PC-9 (cell line): ENCODE measurements at regions of chr1 and their contacts with region 1.

Region 1: GRCh38 chr1:186985889-186986491 is 157.2 kb downstream of the PLA2G4A start:
- DNase-seq: peak in 1 of 2 experiments; percentile 9
- H3K4me3 ChIP-seq: no peak overlapping the region
- H3K27ac ChIP-seq: no peak overlapping the region
- H3K4me1 ChIP-seq: no peaks in the 10 kb centered on the region
- H3K27me3 ChIP-seq: no peaks in the 10 kb centered on the region
- CTCF ChIP-seq: peak; percentile 80

Region 2: GRCh38 chr1:186375088-186375953 is 610.7 kb before region 1 on chr1 and contains the starts of genes ODR4 and TPR:
- CTCF ChIA-PET with region 1: interaction called, 5 read pairs
- POLR2A ChIA-PET with region 1: no interaction called
- intact Hi-C with region 1: loop called (anchors 1 kb)
- DNase-seq: peak; percentile 96 to 98
- H3K4me3 ChIP-seq: peak within 1 kb of the TSS; percentile 92
- H3K27ac ChIP-seq: peak within 1 kb of the TSS; percentile 93
- H3K4me1 ChIP-seq: peaks cover 25% of the 10 kb centered on the region; the same call in 1 of the 2 replicates
- H3K27me3 ChIP-seq: no peaks in the 10 kb centered on the region
- CTCF ChIP-seq: peak; percentile 91
- total RNA-seq, gene ODR4: 13.7 and 19.6 TPM in 2 replicates
- total RNA-seq, gene TPR: 104 and 123 TPM in 2 replicates

Region 3: DNA sequence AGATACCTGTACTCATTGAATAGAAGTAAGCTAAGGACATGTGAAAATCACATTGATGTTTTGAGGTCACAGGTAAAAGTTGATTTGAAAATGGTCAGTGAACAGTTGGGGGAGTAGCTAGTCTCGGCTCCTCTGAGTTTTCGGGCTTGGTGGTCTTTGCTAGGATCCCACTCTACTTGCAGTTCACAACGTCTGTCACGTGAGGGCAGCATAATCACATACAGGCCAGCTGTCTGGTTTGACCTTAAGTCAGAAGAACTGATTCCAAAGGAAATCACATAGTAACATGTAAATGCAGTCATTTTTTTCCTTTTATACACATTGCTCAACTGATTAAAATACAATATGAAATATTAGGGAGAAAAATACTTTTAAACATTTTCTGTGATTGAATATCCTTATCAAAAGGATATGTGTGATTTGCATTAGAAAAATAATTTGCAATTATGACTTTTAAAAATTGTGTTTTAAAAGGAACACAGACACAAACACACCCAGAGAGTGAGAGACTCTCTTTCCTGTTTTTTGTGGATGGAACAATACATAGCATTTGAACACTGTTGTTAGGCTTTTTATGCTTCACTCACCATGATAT is 503.2 kb before region 1 on chr1:
- CTCF ChIA-PET with region 1: no interaction called
- POLR2A ChIA-PET with region 1: no interaction called
- intact Hi-C with region 1: loop called (anchors 1 kb)
- DNase-seq: peak; percentile 45 to 59
- H3K4me3 ChIP-seq: no peak overlapping the region
- H3K27ac ChIP-seq: no peak overlapping the region
- H3K4me1 ChIP-seq: no peaks in the 10 kb centered on the region
- H3K27me3 ChIP-seq: no peaks in the 10 kb centered on the region
- CTCF ChIP-seq: peak; percentile 93

Region 4: DNA sequence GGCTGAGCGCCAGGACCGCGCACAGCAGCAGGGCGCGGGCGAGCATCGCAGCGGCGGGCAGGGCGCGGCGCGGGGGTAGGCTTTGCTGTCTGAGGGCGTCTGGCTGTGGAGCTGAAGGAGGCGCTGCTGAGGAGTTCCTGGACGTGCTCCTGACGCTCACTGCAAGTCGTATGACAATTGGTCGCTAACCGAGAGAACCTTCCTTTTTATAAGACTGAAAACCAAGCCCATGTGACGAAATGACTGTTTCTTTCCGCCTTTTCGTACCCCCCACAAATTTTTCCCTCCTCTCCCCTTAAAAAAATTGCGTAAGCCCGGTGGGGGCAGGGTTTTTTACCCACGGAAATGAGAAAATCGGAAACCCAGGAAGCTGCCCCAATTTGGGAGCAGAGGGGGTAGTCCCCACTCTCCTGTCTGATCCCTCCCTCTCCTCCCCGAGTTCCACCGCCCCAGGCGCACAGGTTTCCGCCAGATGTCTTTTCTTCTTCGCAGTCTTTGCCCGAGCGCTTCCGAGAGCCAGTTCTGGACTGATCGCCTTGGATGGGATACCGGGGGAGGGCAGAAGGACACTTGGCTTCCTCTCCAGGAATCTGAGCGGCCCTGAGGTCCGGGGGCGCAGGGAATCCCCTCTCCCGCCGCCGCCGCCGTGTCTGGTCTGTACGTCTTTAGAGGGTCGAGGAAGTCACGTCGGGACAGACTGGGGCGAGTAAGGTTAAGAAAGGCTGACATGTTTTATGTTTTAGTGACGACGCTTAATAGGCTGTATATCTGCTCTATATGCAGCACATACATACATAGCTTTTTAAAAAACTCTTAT is 305.5 kb before region 1 on chr1 and contains the start of gene PTGS2:
- CTCF ChIA-PET with region 1: no interaction called
- POLR2A ChIA-PET with region 1: no interaction called
- intact Hi-C with region 1: loop called (anchors 2 kb)
- DNase-seq: peak; percentile 65 to 84
- H3K4me3 ChIP-seq: peak within 1 kb of the TSS; percentile 57
- H3K27ac ChIP-seq: no peak within 1 kb of the TSS
- H3K4me1 ChIP-seq: no peaks in the 10 kb centered on the region; the same call in 1 of the 2 replicates
- H3K27me3 ChIP-seq: no peaks in the 10 kb centered on the region
- CTCF ChIP-seq: no peak; the same call in 1 of the 2 replicates
- total RNA-seq, gene PTGS2: 0.63 and 2.3 TPM in 2 replicates

Region 5: DNA sequence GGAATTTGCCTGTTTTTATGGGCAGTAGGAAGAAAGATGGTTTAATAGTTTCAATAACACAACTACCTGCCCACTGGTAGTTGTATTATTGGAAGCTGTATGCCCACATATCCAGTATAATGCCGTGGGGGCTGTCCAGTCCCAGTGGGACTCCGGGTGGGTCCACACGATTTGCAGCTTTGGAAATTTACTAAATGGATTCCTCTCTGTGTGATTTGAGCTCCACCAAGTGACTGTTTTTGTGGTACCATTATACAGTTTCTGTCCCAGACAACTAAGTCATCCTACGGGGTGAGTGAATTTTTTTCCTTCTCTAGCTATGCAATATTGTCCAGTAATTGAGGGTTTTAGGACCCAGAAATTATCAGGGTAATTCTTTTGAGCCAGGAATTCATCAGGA is 70.4 kb before region 1 on chr1:
- CTCF ChIA-PET with region 1: no interaction called
- POLR2A ChIA-PET with region 1: no interaction called
- intact Hi-C with region 1: loop called (anchors 1 kb)
- DNase-seq: no peak
- H3K4me3 ChIP-seq: no peak overlapping the region
- H3K27ac ChIP-seq: no peak overlapping the region
- H3K4me1 ChIP-seq: no peaks in the 10 kb centered on the region
- H3K27me3 ChIP-seq: no peaks in the 10 kb centered on the region
- CTCF ChIP-seq: no peak